Activated CD4-positive, alpha-beta memory T cell treated with anti-CD3 and anti-CD28 coated beads, Interleukin-2, amount 10 ng/mL, durations not matched to agents 7 days and 5 days (primary cell): ENCODE measurements at regions of chr14 and their contacts with region 1.

Region 1: DNA sequence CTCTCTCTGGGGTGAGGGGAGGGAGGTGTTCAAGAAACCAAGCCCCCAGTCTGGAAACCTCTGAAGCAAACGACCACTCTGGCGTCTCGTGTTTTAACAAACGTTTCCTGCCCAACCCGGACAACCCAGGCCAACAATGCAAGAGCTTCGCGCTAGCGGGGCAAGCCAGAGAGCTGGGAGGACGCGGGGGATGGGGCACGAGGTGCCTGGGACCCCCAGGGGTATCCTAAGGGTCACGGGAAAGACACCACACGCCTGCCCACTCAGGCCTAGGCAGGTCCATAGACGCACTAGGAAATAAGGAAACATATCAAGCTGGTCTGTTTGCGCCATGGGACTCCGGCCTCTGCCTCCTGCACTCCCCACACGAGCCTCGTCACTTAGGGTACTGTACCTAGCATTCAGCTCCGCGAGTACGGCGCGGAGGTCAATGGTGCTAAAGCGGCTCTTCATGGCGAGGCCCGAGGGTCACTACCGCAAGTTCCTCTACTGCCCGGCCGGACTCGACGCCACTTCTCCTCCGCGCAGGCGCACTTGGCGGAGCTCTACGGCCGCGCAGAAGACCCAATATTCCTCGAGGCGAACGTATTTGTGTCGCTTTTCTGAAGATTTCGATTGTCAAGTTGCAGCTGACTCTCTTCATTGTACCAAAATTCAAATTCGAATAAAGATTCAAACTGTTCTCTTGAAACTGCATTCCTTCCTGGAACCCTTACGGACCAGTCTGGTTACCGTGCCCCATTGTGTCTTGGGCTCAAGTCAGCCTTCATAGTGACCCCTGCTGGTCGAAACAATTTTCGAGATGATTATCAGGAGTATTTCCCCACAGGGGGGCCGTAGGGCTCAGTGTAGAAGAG is at the start of gene NEMF:
- DNase-seq: peak; percentile 80
- H3K4me3 Mint-ChIP-seq: peak within 1 kb of the TSS; percentile 96
- H3K27ac Mint-ChIP-seq: peak within 1 kb of the TSS; percentile 94
- H3K4me1 Mint-ChIP-seq: peaks cover 46% of the 10 kb centered on the region
- H3K27me3 Mint-ChIP-seq: no peaks in the 10 kb centered on the region
- total RNA-seq, gene NEMF: 64.7 to 73.3 TPM

Region 2: DNA sequence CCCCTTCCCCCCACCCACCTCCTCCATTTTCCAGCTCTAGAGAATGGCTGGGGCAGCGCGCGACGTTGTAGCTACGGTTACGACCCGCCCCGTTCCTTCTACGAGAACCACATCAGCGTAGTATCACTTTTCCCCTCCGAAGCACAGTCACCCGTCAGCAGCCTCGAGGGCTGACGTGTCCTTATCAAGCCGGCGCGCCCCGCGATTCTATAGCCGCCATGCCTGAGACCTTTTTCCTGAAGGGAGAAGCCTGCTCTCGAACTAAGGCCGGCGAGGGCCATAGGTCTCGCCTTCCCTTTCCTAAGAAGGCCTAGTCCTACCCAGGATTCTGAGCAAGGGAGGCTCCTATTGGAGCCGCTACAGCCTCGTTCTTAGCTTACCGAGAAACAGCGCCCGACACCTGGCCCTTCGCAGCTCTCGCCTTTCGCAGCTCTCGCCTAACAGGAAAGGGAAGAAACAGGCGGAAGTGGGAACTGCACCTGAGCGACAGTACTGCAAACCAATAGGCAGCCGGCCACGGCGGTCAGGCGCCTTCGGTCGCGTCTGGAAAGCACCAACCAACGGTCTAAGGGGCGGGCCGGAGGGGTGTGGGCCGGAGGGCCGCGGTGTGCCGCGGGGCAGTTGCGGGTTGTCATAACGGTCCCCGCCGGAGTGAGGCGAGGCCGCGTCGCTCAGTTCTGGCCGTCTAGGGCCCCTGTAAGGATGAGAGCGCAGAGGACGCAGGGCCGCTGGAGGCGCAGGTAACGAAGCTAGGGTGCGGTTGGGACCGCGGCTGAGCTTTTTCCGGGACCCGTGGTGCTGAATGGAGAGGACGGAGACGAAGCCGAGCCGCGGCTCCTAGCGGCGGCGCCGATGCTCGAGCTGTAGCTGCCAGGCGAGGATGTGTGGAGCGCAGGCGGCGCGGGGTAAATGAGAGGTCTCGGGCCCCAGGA is 232.1 kb before region 1 on chr14 and contains the starts of genes MGAT2 and RPL36AL:
- CTCF ChIA-PET with region 1: interaction called, 8 read pairs
- POLR2A ChIA-PET with region 1: interaction called, 39 read pairs
- DNase-seq: peak; percentile 96
- H3K4me3 Mint-ChIP-seq: peak within 1 kb of the TSS; percentile 94
- H3K27ac Mint-ChIP-seq: peak within 1 kb of the TSS; percentile 94
- H3K4me1 Mint-ChIP-seq: peaks cover 50% of the 10 kb centered on the region
- H3K27me3 Mint-ChIP-seq: no peaks in the 10 kb centered on the region
- total RNA-seq, gene MGAT2: 82.7 to 86.5 TPM
- total RNA-seq, gene RPL36AL: 320 to 330 TPM

Region 3: GRCh38 chr14:49767562-49768300 is 84.8 kb before region 1 on chr14 and contains the start of gene KLHDC2:
- CTCF ChIA-PET with region 1: interaction called, 27 read pairs
- POLR2A ChIA-PET with region 1: interaction called, 59 read pairs
- DNase-seq: peak; percentile 92
- H3K4me3 Mint-ChIP-seq: peak within 1 kb of the TSS; percentile 98
- H3K27ac Mint-ChIP-seq: peak within 1 kb of the TSS; percentile 98
- H3K4me1 Mint-ChIP-seq: peaks cover 37% of the 10 kb centered on the region
- H3K27me3 Mint-ChIP-seq: no peaks in the 10 kb centered on the region
- total RNA-seq, gene KLHDC2: 34.3 to 34.7 TPM

Region 4: DNA sequence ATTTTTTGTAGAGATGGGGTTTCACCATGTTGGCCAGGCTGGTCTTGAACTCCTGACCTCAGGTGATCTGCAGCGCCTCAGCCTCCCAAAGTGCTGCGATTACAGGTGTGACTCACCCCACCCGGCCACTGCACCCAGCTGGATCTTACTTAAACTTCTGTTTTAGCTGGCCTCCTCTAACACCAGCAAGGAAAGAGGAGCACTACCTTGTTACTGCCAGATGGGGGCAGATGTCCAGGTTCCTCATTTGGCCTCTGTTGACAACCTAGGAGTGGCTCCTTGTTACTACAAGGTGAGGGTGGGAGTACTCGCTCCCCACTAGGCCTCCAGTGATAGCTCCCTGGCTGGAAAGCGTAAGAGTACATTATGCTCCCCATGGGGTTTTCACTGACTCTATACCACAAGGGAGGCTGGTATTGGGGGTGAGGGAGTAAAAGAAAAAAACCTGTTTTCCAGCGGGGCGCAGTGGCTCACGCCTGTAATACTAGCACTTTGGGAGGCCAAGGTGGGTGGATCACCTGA is 27.2 kb after region 1 on chr14:
- CTCF ChIA-PET with region 1: interaction called, 17 read pairs
- POLR2A ChIA-PET with region 1: interaction called, 4 read pairs
- DNase-seq: peak; percentile 76
- H3K4me3 Mint-ChIP-seq: no peak overlapping the region
- H3K27ac Mint-ChIP-seq: peak overlapping the region; percentile 50
- H3K4me1 Mint-ChIP-seq: peaks cover 48% of the 10 kb centered on the region
- H3K27me3 Mint-ChIP-seq: no peaks in the 10 kb centered on the region

Region 5: GRCh38 chr14:50045039-50045711 is 192.6 kb after region 1 on chr14:
- CTCF ChIA-PET with region 1: interaction called, 4 read pairs
- POLR2A ChIA-PET with region 1: interaction called, 11 read pairs
- DNase-seq: peak; percentile 89
- H3K4me3 Mint-ChIP-seq: peak overlapping the region; percentile 6
- H3K27ac Mint-ChIP-seq: peak overlapping the region; percentile 92
- H3K4me1 Mint-ChIP-seq: peaks cover 70% of the 10 kb centered on the region
- H3K27me3 Mint-ChIP-seq: no peaks in the 10 kb centered on the region

Region 6: GRCh38 chr14:50106178-50106577 is 253.6 kb after region 1 on chr14:
- CTCF ChIA-PET with region 1: interaction called, 27 read pairs
- POLR2A ChIA-PET with region 1: interaction called, 7 read pairs
- DNase-seq: no peak
- H3K4me3 Mint-ChIP-seq: no peak overlapping the region
- H3K27ac Mint-ChIP-seq: no peak overlapping the region
- H3K4me1 Mint-ChIP-seq: peaks cover 31% of the 10 kb centered on the region
- H3K27me3 Mint-ChIP-seq: no peaks in the 10 kb centered on the region